ENCODE measurements at regions of chr6 and their contacts with region 1.

Region 1: DNA sequence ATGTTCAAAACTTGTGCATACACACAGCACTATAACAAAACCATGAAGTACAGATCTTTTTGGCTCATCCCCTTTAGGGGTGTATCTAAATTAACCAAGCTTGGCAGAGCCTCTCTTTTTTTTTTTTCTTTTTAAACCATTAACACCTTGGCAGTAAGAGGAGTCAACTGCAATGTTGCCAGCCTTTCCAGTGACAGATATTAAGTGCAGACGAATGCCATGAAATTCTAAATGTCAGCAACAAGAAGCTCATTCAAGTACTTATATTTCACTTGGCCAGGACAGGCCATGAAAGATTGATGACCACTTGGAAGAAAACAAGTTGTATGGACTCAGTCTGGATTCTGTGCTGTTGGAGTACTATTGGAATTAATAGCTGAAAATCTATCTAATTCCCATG is 49.8 kb downstream of the SLC17A5 start:
- DNase-seq: no peak
- ATAC-seq: no peak
- H3K4me3 ChIP-seq: no peak overlapping the region
- H3K27ac ChIP-seq: no peak overlapping the region
- H3K4me1 ChIP-seq: no peaks in the 10 kb centered on the region
- H3K27me3 ChIP-seq: no peaks in the 10 kb centered on the region
- CTCF ChIP-seq: no peak
- POLR2A ChIP-seq: no peak
- RAD21 ChIP-seq: no peak

Region 2: DNA sequence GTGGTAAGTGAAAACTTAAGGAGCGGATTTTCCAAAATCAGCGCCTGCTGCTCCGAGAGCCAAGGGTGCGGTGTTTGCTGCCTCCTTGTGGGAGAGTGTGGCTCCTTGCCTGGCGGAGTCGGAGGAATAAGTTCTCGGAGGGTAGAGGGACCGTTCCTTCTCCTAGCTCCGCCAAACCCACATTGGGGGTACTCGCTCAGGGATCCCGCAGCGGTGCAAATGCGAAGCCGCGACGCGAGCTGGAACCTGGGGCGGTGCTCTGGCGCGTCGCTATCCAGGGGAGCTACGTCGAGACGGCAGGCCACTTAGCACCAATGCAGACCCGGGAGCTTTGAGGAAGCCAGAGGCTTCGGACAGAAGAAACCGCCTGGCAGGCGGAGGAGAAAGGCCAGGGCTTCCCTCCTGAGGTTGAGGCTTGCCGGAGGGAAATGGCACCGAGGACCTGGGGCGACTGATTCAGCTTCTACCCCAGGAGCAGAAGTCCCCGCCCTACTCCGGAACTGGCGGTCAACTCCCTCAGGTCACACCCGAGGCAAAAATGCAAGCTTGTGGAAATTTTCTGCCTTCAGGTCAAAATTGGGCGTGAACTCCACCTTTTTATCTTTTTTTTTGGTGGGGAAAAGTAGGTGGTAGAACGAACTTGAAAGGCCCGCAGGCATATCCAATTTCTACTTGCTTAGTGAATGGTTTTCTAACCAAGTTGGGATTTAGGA is 215.1 kb before region 1 on chr6:
- CTCF ChIA-PET with region 1: no interaction called
- POLR2A ChIA-PET with region 1: no interaction called
- dilution Hi-C with region 1: no loop called
- in situ Hi-C with region 1: no loop called
- intact Hi-C with region 1: no loop called
- DNase-seq: peak; percentile 51
- ATAC-seq: peak; percentile 92
- H3K4me3 ChIP-seq: peak overlapping the region; percentile 45
- H3K27ac ChIP-seq: peak overlapping the region; percentile 30; the same call in 1 of the 2 replicates
- H3K4me1 ChIP-seq: no peaks in the 10 kb centered on the region
- H3K27me3 ChIP-seq: no peaks in the 10 kb centered on the region
- CTCF ChIP-seq: peak; percentile 69
- POLR2A ChIP-seq: no peak
- RAD21 ChIP-seq: peak; percentile 67

Region 3: DNA sequence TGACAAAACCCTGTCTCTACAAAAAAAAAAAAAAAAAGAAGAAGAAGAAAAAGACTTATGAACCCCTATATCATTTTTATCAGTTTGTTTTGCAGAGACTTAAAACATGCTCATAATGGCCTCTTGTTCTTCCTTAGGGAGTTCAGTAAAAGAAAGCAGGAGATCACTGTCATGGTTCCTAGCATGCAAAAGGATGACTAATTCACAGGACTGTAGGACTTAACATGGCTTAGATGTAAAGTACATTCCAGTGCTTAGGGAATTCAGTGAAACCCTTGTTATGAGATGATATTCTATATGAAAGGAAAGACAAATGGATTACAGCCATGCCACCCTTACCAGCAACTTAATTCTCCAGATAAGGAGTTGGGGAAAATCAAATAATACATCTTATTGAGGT is 112.6 kb before region 1 on chr6:
- CTCF ChIA-PET with region 1: no interaction called
- POLR2A ChIA-PET with region 1: no interaction called
- dilution Hi-C with region 1: loop called (anchors 10 kb)
- in situ Hi-C with region 1: no loop called
- intact Hi-C with region 1: no loop called
- DNase-seq: peak; percentile 50
- ATAC-seq: peak; percentile 64
- H3K4me3 ChIP-seq: no peak overlapping the region
- H3K27ac ChIP-seq: no peak overlapping the region
- H3K4me1 ChIP-seq: no peaks in the 10 kb centered on the region
- H3K27me3 ChIP-seq: no peaks in the 10 kb centered on the region
- CTCF ChIP-seq: no peak
- POLR2A ChIP-seq: no peak
- RAD21 ChIP-seq: no peak

Region 4: DNA sequence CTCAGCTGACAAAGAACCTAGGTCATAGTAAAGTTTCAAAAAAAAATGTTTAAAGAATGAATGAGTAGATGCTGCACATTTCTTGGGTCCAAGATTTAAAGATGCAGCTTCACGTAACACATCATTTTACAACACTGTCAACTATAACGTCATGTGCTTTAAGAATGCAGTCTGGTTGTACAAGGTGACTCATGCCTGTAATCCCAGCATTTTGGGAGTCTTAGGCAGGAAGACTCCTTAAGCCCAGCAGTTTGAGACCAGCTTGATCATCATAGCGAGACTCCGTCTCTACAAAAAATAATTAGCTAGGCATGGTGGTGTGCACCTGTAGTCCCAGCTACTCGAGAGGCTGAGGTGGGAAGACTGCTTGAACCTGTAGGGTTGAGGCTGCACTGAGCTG is 27.8 kb after region 1 on chr6:
- CTCF ChIA-PET with region 1: no interaction called
- POLR2A ChIA-PET with region 1: no interaction called
- dilution Hi-C with region 1: no loop called
- in situ Hi-C with region 1: no loop called
- intact Hi-C with region 1: no loop called
- DNase-seq: peak; percentile 93
- ATAC-seq: peak; percentile 93
- H3K4me3 ChIP-seq: no peak overlapping the region
- H3K27ac ChIP-seq: 0 out of 2 replicates have a peak overlapping the region, but pooled peaks have one; percentile 29
- H3K4me1 ChIP-seq: peaks cover 4% of the 10 kb centered on the region
- H3K27me3 ChIP-seq: no peaks in the 10 kb centered on the region
- CTCF ChIP-seq: no peak
- POLR2A ChIP-seq: no peak
- RAD21 ChIP-seq: no peak

Region 5: GRCh38 chr6:73653571-73654424 is 49.8 kb after region 1 on chr6 and contains the start of gene SLC17A5:
- CTCF ChIA-PET with region 1: no interaction called
- POLR2A ChIA-PET with region 1: no interaction called
- dilution Hi-C with region 1: no loop called
- in situ Hi-C with region 1: no loop called
- intact Hi-C with region 1: no loop called
- DNase-seq: peak; percentile 92
- ATAC-seq: peak; percentile 98
- H3K4me3 ChIP-seq: peak within 1 kb of the TSS; percentile 78
- H3K27ac ChIP-seq: peak within 1 kb of the TSS; percentile 88
- H3K4me1 ChIP-seq: peaks cover 3% of the 10 kb centered on the region; the same call in 1 of the 2 replicates
- H3K27me3 ChIP-seq: no peaks in the 10 kb centered on the region
- CTCF ChIP-seq: no peak
- POLR2A ChIP-seq: peak; percentile 83
- RAD21 ChIP-seq: no peak
- total RNA-seq, gene SLC17A5: 27.2 and 37.5 TPM in 2 replicates

Measured in IMR-90 (cell line).